ENCODE measurements at regions of chr9 and their contacts with region 1.

Region 1: DNA sequence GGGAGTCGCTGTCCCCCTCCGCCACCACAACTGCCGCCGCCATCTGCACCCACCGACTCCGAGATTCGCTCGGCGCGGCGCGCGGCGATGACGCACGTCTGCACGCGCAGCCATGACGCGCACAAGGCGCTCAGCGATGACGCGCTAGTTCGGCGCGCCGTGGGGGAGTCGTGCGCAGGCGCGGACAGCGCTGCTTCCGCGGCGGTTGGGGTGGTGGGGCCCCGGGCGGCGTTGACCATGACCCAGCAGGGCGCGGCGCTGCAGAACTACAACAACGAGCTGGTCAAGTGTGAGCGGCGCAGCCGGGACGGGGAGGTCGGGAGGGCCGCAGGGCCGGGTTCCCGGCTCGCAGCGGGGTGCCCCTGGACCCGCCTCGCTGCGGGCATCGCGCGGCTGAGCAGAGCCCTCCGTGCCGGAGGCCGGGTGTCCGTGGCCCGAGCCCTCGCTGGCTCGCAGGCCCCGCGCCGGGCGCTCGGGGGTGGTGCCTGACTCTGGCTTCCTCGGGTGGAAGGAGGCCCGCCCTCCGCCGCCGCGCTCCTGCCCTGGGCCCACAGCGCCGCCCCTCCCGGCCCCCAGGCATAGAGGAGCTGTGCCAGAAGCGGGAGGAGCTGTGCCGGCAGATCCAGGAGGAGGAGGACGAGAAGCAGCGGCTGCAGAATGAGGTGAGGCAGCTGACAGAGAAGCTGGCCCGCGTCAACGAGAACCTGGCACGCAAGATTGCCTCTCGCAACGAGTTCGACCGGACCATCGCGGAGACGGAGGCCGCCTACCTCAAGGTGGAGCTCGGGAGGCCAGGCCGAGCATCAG is at the starts of genes ANAPC2 and SSNA1:
- DNase-seq: peak; percentile 95
- H3K4me3 Mint-ChIP-seq: peak within 1 kb of the TSS; percentile 97
- H3K27ac Mint-ChIP-seq: peak within 1 kb of the TSS; percentile 93
- H3K4me1 Mint-ChIP-seq: peaks cover 40% of the 10 kb centered on the region
- H3K27me3 Mint-ChIP-seq: no peaks in the 10 kb centered on the region
- total RNA-seq, gene ANAPC2: 36.3 to 36.9 TPM
- total RNA-seq, gene SSNA1: 58.9 to 62.1 TPM

Region 2: GRCh38 chr9:137150617-137151457 is 37.9 kb before region 1 on chr9:
- CTCF ChIA-PET with region 1: no interaction called
- POLR2A ChIA-PET with region 1: no interaction called
- intact Hi-C with region 1: no loop called
- DNase-seq: peak; percentile 85
- H3K4me3 Mint-ChIP-seq: no peak overlapping the region
- H3K27ac Mint-ChIP-seq: no peak overlapping the region
- H3K4me1 Mint-ChIP-seq: no peaks in the 10 kb centered on the region
- H3K27me3 Mint-ChIP-seq: peaks cover 8% of the 10 kb centered on the region

Region 3: DNA sequence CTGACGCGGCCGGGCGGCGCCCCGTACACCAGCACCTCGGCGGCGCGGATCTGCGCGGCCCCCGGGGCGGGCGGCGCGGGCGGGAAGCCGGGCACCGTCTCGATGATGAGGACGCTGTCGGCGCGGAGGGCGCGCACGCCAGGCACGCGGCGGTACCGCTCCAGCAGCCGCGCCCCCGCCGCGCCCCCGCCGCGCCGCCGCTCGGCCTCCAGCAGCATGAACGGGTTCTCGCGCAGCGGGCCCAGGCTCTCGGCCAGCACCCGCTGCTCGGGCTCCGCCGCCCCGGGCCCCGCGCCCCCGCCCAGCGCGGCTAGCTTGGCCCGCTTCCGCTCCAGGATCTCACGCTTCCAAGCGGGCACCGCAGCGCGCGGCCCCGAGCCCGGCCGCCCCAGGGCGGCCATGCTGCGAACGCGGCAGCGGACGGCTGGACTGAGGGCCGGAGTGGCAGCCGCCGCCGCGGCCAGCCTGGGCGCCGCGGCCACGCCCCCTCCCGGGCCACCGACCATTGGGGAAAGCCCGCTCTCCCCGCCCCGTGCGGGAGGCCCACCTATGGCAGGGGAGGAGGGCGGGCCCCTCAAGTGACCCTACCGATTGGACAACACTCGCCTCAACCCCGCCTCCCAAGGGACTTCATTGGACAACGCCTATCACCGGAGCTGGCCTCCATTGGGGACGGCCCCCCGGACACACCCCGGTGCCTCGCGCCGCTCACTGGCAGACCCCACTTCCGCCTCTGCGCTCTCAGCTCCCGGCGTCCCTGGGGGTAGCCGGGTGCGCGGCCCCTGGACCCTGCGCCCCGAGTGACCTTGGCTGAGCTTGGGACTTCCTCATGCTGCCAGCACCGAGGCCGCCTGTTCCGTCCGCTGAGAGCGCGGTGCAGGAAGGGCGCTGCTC is 11.9 kb after region 1 on chr9 and contains the start of gene TPRN:
- CTCF ChIA-PET with region 1: interaction called, 14 read pairs
- POLR2A ChIA-PET with region 1: interaction called, 14 read pairs
- intact Hi-C with region 1: loop called (anchors 1 kb)
- DNase-seq: peak; percentile 99
- H3K4me3 Mint-ChIP-seq: peak within 1 kb of the TSS; percentile 82
- H3K27ac Mint-ChIP-seq: peak within 1 kb of the TSS; percentile 67
- H3K4me1 Mint-ChIP-seq: peaks cover 26% of the 10 kb centered on the region
- H3K27me3 Mint-ChIP-seq: no peaks in the 10 kb centered on the region
- total RNA-seq, gene TPRN: 6.1 to 6.7 TPM

Region 4: DNA sequence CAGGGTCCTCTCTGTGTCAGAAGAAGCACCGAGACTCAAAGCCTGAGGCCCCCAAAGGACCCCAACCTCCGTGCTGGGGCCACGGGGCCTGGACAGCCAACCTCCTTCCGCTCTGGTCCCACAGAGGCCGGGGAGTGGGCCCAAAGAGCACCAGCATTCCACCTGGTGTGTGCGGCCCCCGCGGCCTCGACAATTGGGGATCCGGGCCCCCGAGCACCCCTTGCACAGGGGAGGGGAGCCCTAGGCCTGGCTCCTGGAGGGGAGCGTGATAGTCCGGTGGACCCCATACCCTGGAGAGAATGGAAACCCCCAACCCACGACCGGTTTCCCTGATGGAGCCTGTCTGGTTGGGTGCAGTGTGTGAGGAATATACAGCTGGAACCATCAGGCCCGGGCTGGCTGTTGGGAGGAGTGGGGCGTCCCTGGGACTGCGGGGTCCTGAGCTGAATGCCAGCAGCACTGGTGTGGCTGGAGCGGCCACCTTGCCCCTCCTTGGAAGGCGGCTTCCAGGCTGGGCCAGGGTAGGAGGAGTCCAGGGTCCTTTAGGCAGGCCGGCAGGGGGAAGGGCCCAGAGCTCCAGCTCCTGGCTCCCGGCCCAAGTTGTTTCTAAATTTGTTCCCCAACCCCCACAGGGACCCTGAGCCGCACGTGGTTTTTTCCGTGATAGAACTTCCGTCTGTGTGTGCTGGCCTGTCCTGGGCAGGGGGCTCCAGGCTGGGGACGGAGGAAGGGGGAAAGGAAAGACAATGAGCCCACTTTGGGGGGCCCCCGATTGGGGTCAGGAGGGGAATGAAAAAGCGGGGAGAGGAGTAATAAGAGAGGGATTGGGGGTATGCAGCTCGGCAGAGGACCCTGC is 88.0 kb after region 1 on chr9:
- CTCF ChIA-PET with region 1: no interaction called
- POLR2A ChIA-PET with region 1: no interaction called
- intact Hi-C with region 1: no loop called
- DNase-seq: no peak
- H3K4me3 Mint-ChIP-seq: peak overlapping the region; percentile 75
- H3K27ac Mint-ChIP-seq: no peak overlapping the region
- H3K4me1 Mint-ChIP-seq: peaks cover 8% of the 10 kb centered on the region
- H3K27me3 Mint-ChIP-seq: no peaks in the 10 kb centered on the region

Region 5: DNA sequence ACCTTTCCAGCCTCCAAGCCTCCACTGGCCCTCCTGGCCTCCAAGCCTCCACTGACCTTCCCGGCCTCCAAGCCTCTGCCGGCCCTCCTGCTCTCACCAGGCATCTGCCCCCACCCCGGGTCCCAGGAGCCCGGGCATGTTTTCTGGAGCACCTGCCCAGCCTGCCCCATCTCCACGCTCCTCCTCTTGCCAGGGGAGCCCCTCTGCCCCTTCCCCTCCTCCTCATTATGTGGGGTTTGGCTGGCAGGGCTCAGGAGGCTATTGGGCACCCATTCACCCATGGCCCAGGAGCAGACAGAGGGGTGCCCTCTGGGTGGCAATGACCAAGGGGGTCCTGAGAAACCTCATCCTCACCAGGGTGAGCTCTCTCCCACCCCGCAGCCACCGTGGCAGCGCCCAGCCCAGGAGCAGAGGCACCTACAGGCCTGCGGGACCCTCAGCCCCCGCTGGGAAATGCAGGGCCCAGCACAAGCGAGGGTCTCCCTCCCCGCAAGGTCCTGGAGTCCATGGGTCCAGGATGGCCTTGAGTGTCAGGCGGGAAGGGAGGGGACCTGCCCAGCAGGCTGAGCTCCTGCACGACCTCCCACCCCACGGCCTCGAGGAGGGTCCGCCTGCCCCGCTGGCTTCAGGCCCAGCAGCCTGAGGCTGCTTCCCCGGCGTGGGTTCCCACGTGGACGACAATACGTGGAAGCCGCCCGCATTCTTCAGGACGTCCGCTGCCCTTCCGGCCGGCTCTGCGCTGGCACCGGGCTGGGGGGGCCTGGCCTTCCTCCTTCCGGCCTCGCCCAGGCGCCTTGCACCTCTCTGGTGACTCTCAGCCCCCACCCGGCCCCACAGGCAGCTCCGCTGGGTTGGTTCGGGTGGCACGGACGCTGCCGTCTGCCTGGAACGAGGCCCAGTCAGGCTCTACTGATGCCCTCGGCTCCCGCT is 164.8 kb after region 1 on chr9:
- CTCF ChIA-PET with region 1: no interaction called
- POLR2A ChIA-PET with region 1: no interaction called
- intact Hi-C with region 1: no loop called
- DNase-seq: no peak
- H3K4me3 Mint-ChIP-seq: no peak overlapping the region
- H3K27ac Mint-ChIP-seq: no peak overlapping the region
- H3K4me1 Mint-ChIP-seq: no peaks in the 10 kb centered on the region
- H3K27me3 Mint-ChIP-seq: no peaks in the 10 kb centered on the region